CD4-positive, alpha-beta memory T cell (primary cell): ENCODE measurements at regions of chr1 and their contacts with region 1.

Region 1: GRCh38 chr1:173867753-173868265 is at the start of gene GAS5:
- DNase-seq: peak; percentile 98 to 100 (median 99)
- H3K4me3 ChIP-seq: peak within 1 kb of the TSS; percentile 71 to 79
- H3K4me3 Mint-ChIP-seq: peak within 1 kb of the TSS; percentile 95 to 99 (median 96)
- H3K27ac ChIP-seq: peak within 1 kb of the TSS; percentile 89
- H3K27ac Mint-ChIP-seq: peak within 1 kb of the TSS; percentile 94 to 99 (median 97)
- H3K4me1 ChIP-seq: peaks cover 84% of the 10 kb centered on the region
- H3K4me1 Mint-ChIP-seq: peaks cover 52 to 92% (median 63%) of the 10 kb centered on the region in 4 donors
- H3K27me3 ChIP-seq: no peaks in the 10 kb centered on the region
- H3K27me3 Mint-ChIP-seq: no peaks in the 10 kb centered on the region
- total RNA-seq, gene GAS5: 676 to 709 TPM

Region 2: DNA sequence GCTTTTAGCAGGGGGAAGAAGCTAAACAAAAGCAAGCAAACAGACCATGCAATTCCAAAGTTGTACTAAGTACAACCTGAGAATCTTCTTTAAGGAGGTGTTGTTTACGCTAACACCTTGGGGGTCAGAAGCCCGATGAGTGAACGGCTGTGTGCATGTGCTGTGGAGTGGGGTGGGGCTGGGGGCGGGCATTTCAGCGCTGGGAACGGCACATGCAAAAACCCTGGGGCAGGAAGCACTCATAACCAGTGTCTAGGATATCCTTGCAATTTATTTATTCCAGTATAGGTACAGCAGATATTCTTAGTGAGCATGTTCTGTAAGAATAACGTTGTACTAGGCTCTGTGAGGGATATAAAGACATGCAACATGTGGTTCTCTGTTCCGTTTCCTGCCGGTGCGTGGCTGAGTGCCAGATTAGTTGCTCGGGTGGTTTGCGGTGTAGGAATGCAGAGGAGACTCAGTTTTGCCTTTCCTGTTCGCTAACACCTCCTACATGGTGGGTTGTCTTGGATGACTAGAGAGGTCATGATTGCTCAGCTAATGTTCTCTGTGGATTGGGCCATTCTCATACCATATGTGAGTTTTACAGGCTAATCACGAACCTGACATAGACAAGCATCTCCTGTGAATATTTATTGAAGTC is 1205.2 kb before region 1 on chr1:
- CTCF ChIA-PET with region 1: no interaction called
- POLR2A ChIA-PET with region 1: no interaction called
- intact Hi-C with region 1: no loop called
- DNase-seq: peak; percentile 82 to 93 (median 85)
- H3K4me3 ChIP-seq: peak overlapping the region in 1 of 2 donors; percentile 34
- H3K4me3 Mint-ChIP-seq: peak overlapping the region; percentile 79 to 95 (median 88)
- H3K27ac ChIP-seq: peak overlapping the region; percentile 33
- H3K27ac Mint-ChIP-seq: peak overlapping the region; percentile 57 to 90 (median 82)
- H3K4me1 ChIP-seq: peaks cover 59% of the 10 kb centered on the region
- H3K4me1 Mint-ChIP-seq: peaks cover 57 to 81% (median 69%) of the 10 kb centered on the region in 4 donors
- H3K27me3 ChIP-seq: no peaks in the 10 kb centered on the region
- H3K27me3 Mint-ChIP-seq: no peaks in the 10 kb centered on the region

Region 3: DNA sequence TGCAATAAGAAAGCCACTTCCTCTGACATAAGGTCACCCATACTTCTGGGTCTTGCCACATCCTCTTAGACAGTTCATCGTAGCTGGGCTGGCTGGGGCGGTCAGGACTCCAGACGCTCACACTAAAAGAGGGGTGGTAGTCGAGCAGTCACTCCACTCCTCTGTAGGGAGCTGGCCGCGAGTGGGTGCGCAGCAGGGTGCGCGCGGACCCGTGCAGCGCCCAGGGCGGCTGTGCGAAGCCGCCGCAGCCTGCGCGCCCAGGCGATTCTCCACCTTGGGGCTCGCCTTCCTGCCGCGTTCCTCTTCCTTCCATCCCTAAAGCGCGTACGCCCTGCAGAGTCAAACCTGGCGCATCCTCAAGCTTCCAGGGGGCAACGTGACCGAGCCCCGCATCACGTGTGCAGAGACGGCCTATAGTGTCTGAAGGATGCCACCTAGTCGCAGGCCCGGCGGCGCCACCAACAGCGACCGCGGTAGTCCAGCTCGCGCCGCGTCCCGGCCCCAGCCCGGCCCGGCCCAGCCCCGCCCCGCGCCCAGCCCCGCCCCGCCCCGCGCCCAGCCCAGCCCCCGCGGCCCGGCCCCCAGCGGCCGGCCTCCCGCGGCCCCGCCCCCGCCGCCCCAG is 391.0 kb before region 1 on chr1:
- CTCF ChIA-PET with region 1: interaction called, 3 read pairs
- POLR2A ChIA-PET with region 1: interaction called, 49 read pairs
- intact Hi-C with region 1: loop called (anchors 1 kb)
- DNase-seq: peak; percentile 77 to 90 (median 84)
- H3K4me3 ChIP-seq: peak overlapping the region; percentile 93
- H3K4me3 Mint-ChIP-seq: peak overlapping the region; percentile 89 to 94 (median 91)
- H3K27ac ChIP-seq: peak overlapping the region; percentile 89
- H3K27ac Mint-ChIP-seq: peak overlapping the region; percentile 89 to 95 (median 91)
- H3K4me1 ChIP-seq: peaks cover 61% of the 10 kb centered on the region
- H3K4me1 Mint-ChIP-seq: peaks cover 38 to 68% (median 55%) of the 10 kb centered on the region in 4 donors
- H3K27me3 ChIP-seq: no peaks in the 10 kb centered on the region
- H3K27me3 Mint-ChIP-seq: no peaks in the 10 kb centered on the region

Region 4: GRCh38 chr1:173682176-173682575 is 185.6 kb before region 1 on chr1:
- CTCF ChIA-PET with region 1: no interaction called
- POLR2A ChIA-PET with region 1: no interaction called
- intact Hi-C with region 1: no loop called
- DNase-seq: no peak
- H3K4me3 ChIP-seq: no peak overlapping the region
- H3K4me3 Mint-ChIP-seq: no peak overlapping the region
- H3K27ac ChIP-seq: no peak overlapping the region
- H3K27ac Mint-ChIP-seq: peak overlapping the region in 1 of 7 donors; percentile 69
- H3K4me1 ChIP-seq: no peaks in the 10 kb centered on the region
- H3K4me1 Mint-ChIP-seq: peaks cover 0 to 2% (median 0%) of the 10 kb centered on the region in 4 donors
- H3K27me3 ChIP-seq: no peaks in the 10 kb centered on the region
- H3K27me3 Mint-ChIP-seq: peaks cover 0 to 6% of the 10 kb centered on the region in 2 donors

Region 5: GRCh38 chr1:173824331-173825081 is 43.3 kb before region 1 on chr1 and contains the starts of genes CENPL and DARS2:
- CTCF ChIA-PET with region 1: interaction called, 5 read pairs
- POLR2A ChIA-PET with region 1: interaction called, 81 read pairs
- intact Hi-C with region 1: loop called (anchors 1 kb)
- DNase-seq: peak; percentile 92 to 96 (median 93)
- H3K4me3 ChIP-seq: peak within 1 kb of the TSS; percentile 93 to 95
- H3K4me3 Mint-ChIP-seq: peak within 1 kb of the TSS; percentile 93 to 99 (median 97)
- H3K27ac ChIP-seq: peak within 1 kb of the TSS; percentile 79
- H3K27ac Mint-ChIP-seq: peak within 1 kb of the TSS; percentile 97 to 99 (median 97)
- H3K4me1 ChIP-seq: peaks cover 18% of the 10 kb centered on the region
- H3K4me1 Mint-ChIP-seq: peaks cover 27 to 46% (median 33%) of the 10 kb centered on the region in 4 donors
- H3K27me3 ChIP-seq: no peaks in the 10 kb centered on the region
- H3K27me3 Mint-ChIP-seq: no peaks in the 10 kb centered on the region
- total RNA-seq, gene CENPL: 9.0 to 10.2 TPM
- total RNA-seq, gene DARS2: 13.4 to 13.5 TPM

Region 6: DNA sequence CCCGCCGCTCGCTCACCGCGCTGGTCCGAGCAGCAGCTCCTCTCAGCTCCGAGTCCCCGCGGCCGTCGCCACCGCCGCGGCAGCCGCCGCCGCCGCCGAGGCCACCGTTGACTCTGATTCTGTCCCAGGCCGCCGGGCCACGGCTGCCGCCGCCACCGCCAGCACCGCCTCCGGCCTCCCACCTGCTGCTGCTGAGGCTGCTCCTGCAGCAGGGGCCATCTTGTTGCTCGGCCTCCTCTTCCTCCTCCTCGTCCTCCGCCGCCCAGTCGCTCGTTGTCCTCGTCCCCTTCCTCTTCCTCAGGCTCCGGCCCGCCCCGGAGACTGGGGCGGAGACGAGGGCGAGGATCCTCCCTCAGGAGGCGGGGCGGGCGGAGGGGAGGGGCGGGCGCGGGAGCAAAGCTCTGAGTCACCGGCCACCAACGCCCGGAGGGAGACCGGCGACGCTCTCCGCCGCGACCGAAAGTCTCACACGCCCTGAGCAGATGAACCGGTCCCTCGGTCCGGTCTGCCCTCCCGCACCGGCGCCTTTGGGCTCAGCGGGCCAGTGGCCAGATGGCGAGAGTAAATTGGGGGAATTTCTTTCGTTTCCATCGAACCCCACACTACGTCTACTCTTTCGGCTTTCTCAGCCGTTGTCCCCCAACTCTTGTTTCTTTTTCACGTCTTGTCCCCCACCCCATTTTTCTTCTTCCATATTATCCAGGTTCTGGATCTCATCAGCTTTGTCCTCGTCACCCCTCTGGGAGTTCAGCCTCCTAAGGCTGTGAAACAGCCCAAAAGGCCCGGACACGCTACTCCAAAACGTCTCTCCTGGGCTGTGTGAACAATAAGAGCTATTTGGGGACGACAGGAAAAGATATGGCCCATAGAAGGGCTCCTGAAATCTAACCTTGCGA is 154.5 kb after region 1 on chr1 and contains the start of gene RC3H1:
- CTCF ChIA-PET with region 1: no interaction called
- POLR2A ChIA-PET with region 1: interaction called, 41 read pairs
- intact Hi-C with region 1: loop called (anchors 1 kb)
- DNase-seq: peak; percentile 84 to 91 (median 85)
- H3K4me3 ChIP-seq: peak within 1 kb of the TSS; percentile 65 to 100
- H3K4me3 Mint-ChIP-seq: peak within 1 kb of the TSS; percentile 98 to 100 (median 98)
- H3K27ac ChIP-seq: peak within 1 kb of the TSS; percentile 80
- H3K27ac Mint-ChIP-seq: peak within 1 kb of the TSS; percentile 98 to 99 (median 99)
- H3K4me1 ChIP-seq: peaks cover 41% of the 10 kb centered on the region
- H3K4me1 Mint-ChIP-seq: peaks cover 30 to 60% (median 39%) of the 10 kb centered on the region in 4 donors
- H3K27me3 ChIP-seq: no peaks in the 10 kb centered on the region
- H3K27me3 Mint-ChIP-seq: no peaks in the 10 kb centered on the region
- total RNA-seq, gene RC3H1: 49.2 TPM

Region 7: DNA sequence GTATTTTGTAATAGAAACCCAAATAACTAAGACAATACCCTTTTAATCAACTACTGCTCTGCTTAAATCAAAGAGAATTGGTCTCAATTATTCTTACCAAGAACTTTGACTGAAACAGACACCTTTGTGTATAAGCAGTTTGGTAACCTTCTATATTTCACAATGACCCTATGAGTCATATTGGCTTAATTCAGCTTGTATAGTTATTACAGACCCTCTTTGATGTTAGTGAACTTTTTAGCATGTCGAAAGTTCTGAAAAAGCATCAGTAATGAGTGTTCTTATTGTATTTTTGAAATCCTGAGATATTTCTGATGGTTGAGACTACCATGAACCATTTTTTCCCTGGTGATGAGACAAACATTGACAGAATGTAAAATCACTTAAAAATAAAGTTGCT is 248.2 kb after region 1 on chr1:
- CTCF ChIA-PET with region 1: no interaction called
- POLR2A ChIA-PET with region 1: no interaction called
- intact Hi-C with region 1: no loop called
- DNase-seq: no peak
- H3K4me3 ChIP-seq: no peak overlapping the region
- H3K4me3 Mint-ChIP-seq: no peak overlapping the region
- H3K27ac ChIP-seq: no peak overlapping the region
- H3K27ac Mint-ChIP-seq: no peak overlapping the region
- H3K4me1 ChIP-seq: no peaks in the 10 kb centered on the region
- H3K4me1 Mint-ChIP-seq: peaks cover 0 to 3% (median 2%) of the 10 kb centered on the region in 4 donors
- H3K27me3 ChIP-seq: no peaks in the 10 kb centered on the region
- H3K27me3 Mint-ChIP-seq: peaks cover 0 to 2% of the 10 kb centered on the region in 2 donors

Region 8: DNA sequence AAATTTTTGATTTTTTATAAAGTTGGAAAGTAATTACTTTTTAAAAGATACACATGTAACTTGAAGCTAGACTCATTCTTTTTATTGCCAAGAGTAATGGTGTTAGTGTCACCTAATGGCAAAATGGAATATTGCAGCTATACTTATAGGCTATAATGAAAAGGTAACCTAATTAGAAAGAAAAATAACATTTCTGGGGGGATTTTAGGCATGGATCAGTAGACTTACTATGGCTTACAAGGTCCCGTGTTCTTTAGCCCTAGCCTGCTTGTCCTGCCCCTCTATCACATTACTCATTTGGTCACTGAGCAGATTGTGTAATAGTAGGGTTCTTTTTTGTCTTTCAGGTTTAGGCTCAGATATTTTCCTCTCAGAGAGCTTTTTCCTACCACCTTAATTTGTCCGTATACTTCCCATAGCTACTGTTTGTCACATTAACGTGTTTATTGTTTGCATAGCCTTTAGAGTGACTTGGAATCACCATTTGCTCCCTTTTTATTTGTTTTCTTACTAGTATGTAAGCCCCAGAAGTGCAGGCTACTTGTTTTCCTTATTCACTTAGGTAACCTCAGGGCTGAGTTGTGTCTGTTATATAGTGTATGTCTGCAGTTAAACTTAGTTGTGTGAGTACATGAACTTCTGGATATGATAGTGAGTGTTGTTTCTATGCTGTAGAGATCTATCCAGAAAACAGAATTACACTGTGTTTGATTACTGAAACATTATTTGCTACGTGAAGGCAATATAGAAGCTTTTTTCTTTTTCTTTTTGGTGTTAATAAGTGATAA is 350.2 kb after region 1 on chr1:
- CTCF ChIA-PET with region 1: interaction called, 4 read pairs
- POLR2A ChIA-PET with region 1: no interaction called
- intact Hi-C with region 1: loop called (anchors 5 kb)
- DNase-seq: peak in 4 of 5 donors; percentile 37 to 45 (median 40)
- H3K4me3 ChIP-seq: no peak overlapping the region
- H3K4me3 Mint-ChIP-seq: no peak overlapping the region
- H3K27ac ChIP-seq: no peak overlapping the region
- H3K27ac Mint-ChIP-seq: no peak overlapping the region
- H3K4me1 ChIP-seq: no peaks in the 10 kb centered on the region
- H3K4me1 Mint-ChIP-seq: peaks cover 0 to 5% (median 2%) of the 10 kb centered on the region in 4 donors
- H3K27me3 ChIP-seq: no peaks in the 10 kb centered on the region
- H3K27me3 Mint-ChIP-seq: no peaks in the 10 kb centered on the region